ENCODE measurements at regions of chr4 and their contacts with region 1.

Region 1: GRCh38 chr4:102751941-102752340 is 8.8 kb downstream of the MANBA start:
- DNase-seq: no peak
- H3K4me3 Mint-ChIP-seq: no peak overlapping the region
- H3K27ac Mint-ChIP-seq: no peak overlapping the region
- H3K4me1 Mint-ChIP-seq: peaks cover 5% of the 10 kb centered on the region
- H3K27me3 Mint-ChIP-seq: no peaks in the 10 kb centered on the region

Region 2: DNA sequence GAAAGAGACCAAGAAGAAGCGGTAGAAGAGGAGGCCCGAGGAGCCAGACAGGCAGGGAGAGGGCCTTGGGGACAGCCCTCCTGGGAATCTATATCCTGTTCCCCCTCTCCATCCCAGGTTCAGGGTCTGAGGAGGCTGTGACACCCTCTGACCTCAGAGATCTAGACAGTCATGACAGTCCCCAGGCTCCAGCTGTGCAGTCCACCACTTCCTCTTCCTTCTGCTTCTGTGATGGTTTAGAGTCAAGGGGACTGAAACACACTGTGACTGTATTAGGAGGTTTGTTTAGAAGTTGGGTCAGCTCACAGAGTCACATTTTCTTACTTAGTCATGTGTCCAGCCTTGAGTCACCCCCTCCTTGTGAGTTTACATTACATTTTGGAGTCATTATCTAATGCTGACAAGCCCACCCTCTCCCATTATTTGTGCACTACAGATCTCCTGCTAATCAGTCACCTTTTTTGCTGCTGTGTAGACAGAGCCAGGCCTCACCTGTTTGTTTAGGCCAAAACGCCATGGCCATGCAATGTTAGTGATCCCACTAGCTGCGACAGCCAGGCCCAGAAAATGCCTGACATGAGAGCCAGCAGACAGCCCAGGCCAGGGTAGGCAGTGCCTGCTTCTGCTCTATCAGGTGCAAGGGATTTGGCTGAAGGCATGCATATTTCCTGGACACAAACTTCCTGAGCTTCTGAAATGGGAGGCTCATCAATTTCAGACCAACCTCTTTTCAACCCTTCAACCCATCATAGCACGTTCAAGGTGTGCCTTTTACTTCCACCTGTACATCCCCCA is 17.2 kb before region 1 on chr4:
- CTCF ChIA-PET with region 1: interaction called, 11 read pairs
- POLR2A ChIA-PET with region 1: no interaction called
- DNase-seq: peak; percentile 24
- H3K4me3 Mint-ChIP-seq: no peak overlapping the region
- H3K27ac Mint-ChIP-seq: peak overlapping the region; percentile 63
- H3K4me1 Mint-ChIP-seq: peaks cover 21% of the 10 kb centered on the region
- H3K27me3 Mint-ChIP-seq: no peaks in the 10 kb centered on the region